Activated CD4-positive, alpha-beta memory T cell treated with anti-CD3 and anti-CD28 coated beads, Interleukin-2, amount 10 ng/mL, durations not matched to agents 7 days and 5 days (primary cell): ENCODE measurements at regions of chr7 and their contacts with region 1.

Region 1: GRCh38 chr7:135710417-135711138 is 17.4 kb downstream of the SLC13A4 start:
- DNase-seq: peak; percentile 19
- H3K4me3 Mint-ChIP-seq: no peak overlapping the region
- H3K27ac Mint-ChIP-seq: no peak overlapping the region
- H3K4me1 Mint-ChIP-seq: no peaks in the 10 kb centered on the region
- H3K27me3 Mint-ChIP-seq: no peaks in the 10 kb centered on the region

Region 2: GRCh38 chr7:135672560-135673359 is 37.8 kb before region 1 on chr7:
- CTCF ChIA-PET with region 1: interaction called, 26 read pairs
- POLR2A ChIA-PET with region 1: no interaction called
- DNase-seq: no peak
- H3K4me3 Mint-ChIP-seq: no peak overlapping the region
- H3K27ac Mint-ChIP-seq: no peak overlapping the region
- H3K4me1 Mint-ChIP-seq: peaks cover 3% of the 10 kb centered on the region
- H3K27me3 Mint-ChIP-seq: no peaks in the 10 kb centered on the region